ENCODE measurements at regions of chr6 and their contacts with region 1.

Region 1: DNA sequence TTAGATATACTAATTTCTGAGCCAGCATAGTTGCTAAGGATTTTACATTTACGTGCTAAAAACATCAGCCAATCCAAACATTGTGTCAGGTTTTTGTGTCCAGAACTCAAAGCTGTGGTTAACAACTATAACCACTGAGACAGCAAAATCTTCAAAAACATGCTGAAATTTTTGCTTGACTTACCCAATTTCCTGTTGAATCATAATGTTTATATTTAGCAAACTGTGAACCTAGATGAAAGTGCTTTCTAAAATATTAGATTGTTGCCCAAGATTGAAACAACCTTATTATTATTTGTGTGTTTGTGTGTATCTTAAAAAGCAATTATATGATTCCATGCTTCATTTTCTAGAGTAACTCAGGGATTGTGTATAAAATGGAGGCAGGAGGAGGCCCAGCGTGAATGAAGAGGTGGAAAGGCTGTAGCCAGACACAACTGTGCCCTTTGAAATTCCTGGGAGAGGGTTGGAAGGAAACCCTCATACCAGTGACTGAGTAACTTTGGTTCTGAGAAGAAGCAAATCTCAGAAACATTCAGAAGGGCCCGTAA is 48.0 kb downstream of the ARMC2 start:
- DNase-seq: no peak
- ATAC-seq: peak; percentile 71
- H3K4me3 Mint-ChIP-seq: peak overlapping the region; percentile 37
- H3K27ac Mint-ChIP-seq: peak overlapping the region; percentile 95
- H3K4me1 Mint-ChIP-seq: peaks cover 52% of the 10 kb centered on the region
- H3K27me3 Mint-ChIP-seq: peaks cover 5% of the 10 kb centered on the region

Region 2: DNA sequence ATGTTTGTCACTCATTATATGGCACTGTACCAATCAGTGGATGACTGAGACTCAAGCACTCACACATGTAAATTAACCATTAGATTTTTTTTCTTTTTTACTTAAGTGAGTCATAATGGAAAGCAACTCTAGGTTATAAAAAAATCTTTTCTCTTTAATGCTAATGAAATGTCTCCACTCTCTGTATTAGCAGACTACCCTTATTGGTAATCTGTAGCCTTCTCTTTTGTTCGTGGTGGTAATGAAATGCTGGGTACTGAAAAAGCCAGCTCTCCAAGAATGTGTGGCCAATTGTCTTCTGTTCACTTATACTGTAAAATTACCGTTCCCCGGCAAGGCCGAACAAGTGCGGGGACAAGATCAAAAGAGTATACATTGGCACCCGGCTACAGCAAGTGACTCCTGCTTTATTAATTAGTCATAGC is 532.3 kb before region 1 on chr6:
- CTCF ChIA-PET with region 1: no interaction called
- DNase-seq: no peak
- ATAC-seq: no peak
- H3K4me3 Mint-ChIP-seq: peak overlapping the region; percentile 9
- H3K27ac Mint-ChIP-seq: no peak overlapping the region
- H3K4me1 Mint-ChIP-seq: peaks cover 5% of the 10 kb centered on the region
- H3K27me3 Mint-ChIP-seq: no peaks in the 10 kb centered on the region

Region 3: DNA sequence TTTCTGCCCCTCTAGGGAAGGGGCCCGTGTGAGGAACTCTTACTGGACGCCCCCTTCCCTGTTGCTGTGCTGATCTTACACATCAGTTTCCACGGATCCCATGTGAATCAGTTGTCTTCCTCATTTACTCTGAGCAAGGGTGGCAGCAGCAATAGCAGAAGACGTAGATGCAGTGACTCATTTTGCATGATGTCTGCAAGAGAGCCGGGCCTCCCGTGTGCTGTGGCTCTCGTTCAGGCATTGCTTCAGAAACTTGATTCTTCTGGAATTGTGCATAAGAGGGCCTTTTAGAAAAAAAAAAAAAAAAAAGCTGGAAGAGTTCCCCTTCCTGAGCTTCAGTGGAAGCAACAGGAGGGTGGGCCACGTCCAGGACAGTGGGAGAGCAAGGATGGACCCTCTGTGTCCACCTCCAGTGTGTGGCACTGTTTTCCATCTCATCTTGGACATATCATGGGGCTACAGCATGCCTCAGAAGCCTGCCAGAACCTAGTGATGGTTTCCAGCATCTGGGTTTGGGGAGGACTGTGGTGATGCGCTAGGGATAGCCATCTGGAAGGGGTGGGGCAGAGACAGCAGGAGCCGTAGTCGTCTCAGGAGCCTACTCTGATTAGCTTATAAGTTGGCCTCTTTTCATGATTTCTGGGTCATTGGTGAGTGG is 273.4 kb before region 1 on chr6:
- CTCF ChIA-PET with region 1: no interaction called
- DNase-seq: no peak
- ATAC-seq: no peak
- H3K4me3 Mint-ChIP-seq: no peak overlapping the region
- H3K27ac Mint-ChIP-seq: no peak overlapping the region
- H3K4me1 Mint-ChIP-seq: peaks cover 43% of the 10 kb centered on the region
- H3K27me3 Mint-ChIP-seq: no peaks in the 10 kb centered on the region

Region 4: DNA sequence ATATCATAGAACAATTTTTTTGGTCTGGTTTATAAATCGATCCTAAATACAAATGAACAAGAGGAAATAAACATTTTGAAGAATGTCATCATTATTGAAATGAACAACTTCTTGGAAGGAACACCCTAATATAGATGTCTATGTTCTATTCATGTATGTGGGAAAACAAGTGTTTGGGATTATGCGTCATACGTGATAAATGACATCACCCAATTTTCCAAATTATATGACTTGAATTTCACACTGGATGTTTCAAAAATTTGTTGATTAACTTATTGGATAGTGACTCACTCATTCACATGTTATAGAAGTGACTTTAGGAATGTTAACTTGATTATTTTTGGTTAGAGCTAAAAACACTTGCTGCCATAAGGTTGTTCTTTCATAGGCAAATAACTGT is 29.4 kb before region 1 on chr6:
- CTCF ChIA-PET with region 1: interaction called, 23 read pairs
- DNase-seq: no peak
- ATAC-seq: no peak
- H3K4me3 Mint-ChIP-seq: no peak overlapping the region
- H3K27ac Mint-ChIP-seq: peak overlapping the region; percentile 91
- H3K4me1 Mint-ChIP-seq: peaks cover 64% of the 10 kb centered on the region
- H3K27me3 Mint-ChIP-seq: peaks cover 3% of the 10 kb centered on the region

Region 5: GRCh38 chr6:108874470-108875160 is 21.6 kb before region 1 on chr6:
- CTCF ChIA-PET with region 1: interaction called, 23 read pairs
- DNase-seq: peak; percentile 90
- ATAC-seq: peak; percentile 81
- H3K4me3 Mint-ChIP-seq: peak overlapping the region; percentile 62
- H3K27ac Mint-ChIP-seq: peak overlapping the region; percentile 100
- H3K4me1 Mint-ChIP-seq: peaks cover 73% of the 10 kb centered on the region
- H3K27me3 Mint-ChIP-seq: peaks cover 3% of the 10 kb centered on the region

Region 6: GRCh38 chr6:108883172-108883571 is 13.0 kb before region 1 on chr6:
- CTCF ChIA-PET with region 1: interaction called, 37 read pairs
- DNase-seq: no peak
- ATAC-seq: peak; percentile 92
- H3K4me3 Mint-ChIP-seq: peak overlapping the region; percentile 49
- H3K27ac Mint-ChIP-seq: peak overlapping the region; percentile 89
- H3K4me1 Mint-ChIP-seq: peaks cover 54% of the 10 kb centered on the region
- H3K27me3 Mint-ChIP-seq: peaks cover 13% of the 10 kb centered on the region

Region 7: DNA sequence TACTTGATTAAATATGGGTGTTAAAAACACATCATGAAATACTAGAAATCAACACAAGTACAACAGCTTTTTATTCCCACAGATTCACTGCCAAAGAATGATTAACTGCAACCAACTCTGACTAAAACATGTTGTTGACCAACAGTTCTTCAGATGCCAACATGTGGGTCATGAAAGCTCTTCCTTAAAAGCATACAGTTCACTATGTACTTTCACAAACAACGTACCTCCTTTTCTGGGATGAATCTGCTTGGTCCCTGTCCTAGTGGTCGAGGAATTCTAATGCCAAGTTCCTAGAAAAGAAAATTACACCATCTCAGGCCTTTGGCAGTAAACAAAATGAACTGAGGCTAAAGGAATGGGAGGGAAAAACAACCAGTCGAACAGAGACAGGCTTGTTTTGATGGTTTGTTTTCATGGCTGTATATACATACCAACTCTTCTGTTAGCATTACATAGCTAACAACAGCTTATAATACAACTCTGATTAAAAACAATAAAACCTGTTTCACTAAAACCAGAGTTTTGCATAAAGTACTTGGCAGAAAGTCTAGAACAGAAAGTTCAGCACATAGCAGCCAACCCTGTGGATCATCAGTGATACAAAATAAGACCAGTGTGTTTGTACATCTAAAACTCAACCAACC is 106.0 kb after region 1 on chr6:
- CTCF ChIA-PET with region 1: no interaction called
- DNase-seq: no peak
- ATAC-seq: no peak
- H3K4me3 Mint-ChIP-seq: no peak overlapping the region
- H3K27ac Mint-ChIP-seq: no peak overlapping the region
- H3K4me1 Mint-ChIP-seq: peaks cover 41% of the 10 kb centered on the region
- H3K27me3 Mint-ChIP-seq: no peaks in the 10 kb centered on the region

Measured in activated CD8-positive, alpha-beta memory T cell treated with anti-CD3 and anti-CD28 coated beads, Interleukin-2, amount 10 ng/mL, durations not matched to agents 7 days and 5 days (primary cell).